ENCODE measurements at regions of chr9 and their contacts with region 1.

Region 1: GRCh38 chr9:121686930-121687541 is 35.6 kb downstream of the DAB2IP start:
- DNase-seq: peak; percentile 85
- ATAC-seq: peak; percentile 74

Region 2: DNA sequence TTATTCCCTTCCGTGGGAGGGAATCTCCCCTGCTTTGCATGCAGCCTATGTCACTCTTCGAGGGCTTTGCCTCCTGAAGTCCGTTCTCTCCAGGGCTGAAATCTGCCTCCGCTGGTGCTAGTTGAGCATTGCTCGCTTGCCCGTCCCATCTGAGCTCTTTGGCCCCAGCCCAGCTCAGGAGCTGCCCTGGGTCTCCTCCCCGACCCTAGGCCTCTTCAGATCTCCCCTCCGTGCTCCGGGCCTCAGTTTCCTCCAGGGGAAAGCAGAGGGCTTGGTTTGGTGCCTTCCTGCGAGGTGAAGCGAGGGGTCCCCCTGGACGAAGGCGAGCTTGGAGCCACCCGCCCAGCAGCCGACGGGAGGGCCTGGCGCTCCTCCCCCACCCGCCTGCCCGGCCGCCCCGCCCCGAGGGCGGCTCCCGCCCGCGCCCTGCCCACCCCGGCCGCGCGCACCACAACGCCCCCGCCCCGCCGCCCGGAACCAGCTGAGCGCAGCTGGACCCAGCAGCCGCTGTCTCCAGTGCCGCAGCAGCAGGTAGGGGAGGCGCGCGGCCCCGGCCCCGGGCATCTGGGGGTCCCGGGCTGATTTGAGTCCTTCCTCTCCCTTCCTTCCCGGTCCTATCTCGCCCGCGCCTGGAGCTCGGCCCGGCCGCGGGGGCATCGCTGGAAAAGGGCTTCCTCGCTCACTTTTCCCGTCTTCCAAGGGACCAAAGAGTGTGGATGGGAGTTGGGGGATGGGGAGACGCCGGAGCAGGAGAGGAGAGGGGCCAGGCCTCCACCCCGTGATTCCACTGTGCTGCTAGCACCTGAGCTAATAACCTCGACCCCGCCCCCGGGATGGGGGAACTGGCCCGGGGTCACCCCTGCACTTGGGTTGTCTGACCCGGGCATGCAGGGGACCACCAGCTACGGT is 419.1 kb before region 1 on chr9 and contains the start of gene GSN:
- intact Hi-C with region 1: no loop called
- DNase-seq: peak; percentile 92
- ATAC-seq: peak; percentile 90
- total RNA-seq, gene GSN: 717 TPM

Region 3: GRCh38 chr9:121439711-121440664 is 247.0 kb before region 1 on chr9:
- intact Hi-C with region 1: no loop called
- DNase-seq: no peak
- ATAC-seq: peak; percentile 86

Region 4: DNA sequence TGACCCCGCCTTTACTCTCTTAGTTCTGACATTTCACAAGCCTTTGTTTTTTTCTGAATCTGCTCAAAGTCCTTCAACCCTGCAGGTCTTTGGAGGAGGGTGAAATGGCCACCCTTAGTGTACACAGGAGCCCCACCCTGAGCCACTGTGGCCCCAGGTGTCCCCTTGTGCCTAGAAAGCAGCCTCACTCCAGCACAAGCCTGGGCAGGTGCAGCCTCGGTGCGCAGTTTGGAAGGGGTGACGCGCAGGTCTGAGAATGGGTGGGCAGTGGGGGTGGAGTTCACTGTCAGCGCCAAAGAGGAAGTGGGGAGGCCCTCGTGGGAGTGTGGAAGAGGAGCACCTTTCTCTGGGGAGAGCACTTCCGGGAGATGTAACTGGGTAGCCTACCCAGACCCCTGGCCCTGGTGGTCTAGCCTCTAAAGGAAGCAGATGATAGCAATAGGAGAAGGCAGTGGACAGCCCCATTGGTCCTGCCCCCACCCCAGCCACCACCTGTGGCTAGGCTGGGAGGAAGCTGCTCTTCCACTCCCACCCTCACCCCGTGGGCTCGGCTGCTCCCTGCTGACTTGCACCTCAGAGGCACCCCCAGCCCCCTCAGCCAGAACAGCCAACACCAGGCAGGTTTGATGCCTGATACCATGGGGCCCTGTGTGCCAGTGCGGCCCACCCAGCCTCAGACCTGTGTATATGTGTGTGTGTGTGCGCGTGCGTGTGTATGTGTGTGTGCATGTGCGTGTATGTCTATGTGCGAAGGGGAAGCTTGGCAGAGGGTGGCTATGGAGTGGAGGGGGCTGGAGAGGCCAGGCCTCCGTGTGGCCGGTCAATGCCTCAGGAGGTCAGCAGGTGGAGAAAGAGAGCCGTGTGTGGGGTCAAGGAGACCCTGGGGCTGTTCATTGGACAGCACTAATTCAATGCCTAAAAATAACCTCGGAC is 52.4 kb before region 1 on chr9:
- intact Hi-C with region 1: loop called (anchors 10 kb)
- DNase-seq: peak; percentile 47
- ATAC-seq: peak; percentile 73

Region 5: GRCh38 chr9:121744002-121744686 is 57.1 kb after region 1 on chr9:
- intact Hi-C with region 1: no loop called
- DNase-seq: peak; percentile 78
- ATAC-seq: peak; percentile 74

Region 6: DNA sequence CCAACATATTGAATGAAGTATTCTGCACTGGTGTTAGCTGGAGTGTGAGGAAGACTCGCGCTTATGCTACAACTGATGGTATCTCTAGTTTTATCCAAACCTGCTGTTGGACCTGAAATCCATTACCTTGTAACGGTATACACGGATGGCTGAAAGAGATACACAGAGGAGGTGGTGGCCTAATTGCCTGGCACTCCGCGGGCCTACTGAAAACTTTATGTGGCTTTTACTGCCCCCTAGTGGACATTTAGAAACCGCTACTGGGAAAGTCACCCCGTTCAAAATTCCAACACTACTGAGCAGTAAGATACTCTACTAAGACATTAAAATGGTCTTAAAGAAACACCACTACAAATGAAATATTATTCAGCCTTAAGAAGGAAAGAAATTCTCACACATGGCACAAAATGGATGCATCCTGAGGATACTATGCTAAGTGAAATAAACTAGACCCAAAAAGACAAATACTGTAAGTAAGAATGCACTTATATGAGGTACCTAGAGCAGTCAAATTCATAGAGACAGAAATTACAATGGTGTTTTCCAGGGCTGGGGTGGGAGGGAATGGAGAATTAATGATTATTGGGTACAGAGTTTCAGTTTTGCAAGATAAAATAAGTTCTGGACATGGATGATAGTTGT is 305.7 kb after region 1 on chr9:
- intact Hi-C with region 1: loop called (anchors 10 kb)
- DNase-seq: peak; percentile 70
- ATAC-seq: peak; percentile 75

Region 7: GRCh38 chr9:122897969-122898368 is 1210.9 kb after region 1 on chr9:
- intact Hi-C with region 1: no loop called
- DNase-seq: no peak
- ATAC-seq: no peak